Panc1 (cell line): ENCODE measurements at regions of chr3 and their contacts with region 1.

Region 1: GRCh38 chr3:63232739-63233365 is 45.3 kb upstream of the SYNPR start:
- DNase-seq: no peak
- ATAC-seq: no peak
- H3K4me3 ChIP-seq: no peak overlapping the region
- H3K27ac ChIP-seq: no peak overlapping the region
- H3K4me1 ChIP-seq: no peaks in the 10 kb centered on the region
- H3K27me3 ChIP-seq: no peaks in the 10 kb centered on the region
- CTCF ChIP-seq: peak; percentile 29; the same call in 1 of the 2 replicates

Region 2: DNA sequence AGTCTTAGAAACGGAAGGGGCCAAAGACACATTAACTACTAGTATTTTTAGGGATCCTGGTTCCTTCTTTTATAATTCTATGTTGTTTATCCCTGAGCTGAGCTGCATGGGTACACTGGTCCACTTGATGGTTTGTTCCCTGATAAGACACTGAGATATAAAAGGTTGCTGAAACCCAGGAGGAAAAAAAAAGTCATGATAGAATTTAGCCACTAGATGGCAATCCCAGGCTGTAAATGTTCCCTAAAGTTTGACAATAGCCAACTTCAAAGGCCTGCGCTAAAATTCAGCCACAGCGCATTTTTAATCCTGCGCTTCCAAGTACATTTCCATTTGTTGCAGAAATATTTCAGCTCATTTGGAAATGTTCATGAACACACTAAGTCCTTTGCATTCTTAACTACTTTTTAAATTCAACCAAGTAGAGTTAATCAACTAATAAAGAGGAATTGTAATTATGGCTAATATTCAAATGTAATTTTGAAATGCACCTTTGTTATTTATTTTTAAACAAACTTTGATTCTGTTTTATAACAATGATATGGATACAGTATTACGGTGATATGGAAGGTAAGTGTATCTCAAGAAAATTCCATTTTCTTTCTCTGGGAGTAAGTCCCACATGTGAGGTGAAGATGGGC is 610.2 kb before region 1 on chr3:
- CTCF ChIA-PET with region 1: no interaction called
- POLR2A ChIA-PET with region 1: no interaction called
- in situ Hi-C with region 1: no loop called
- intact Hi-C with region 1: loop called (anchors 5 kb)
- DNase-seq: peak; percentile 48
- ATAC-seq: no peak
- H3K4me3 ChIP-seq: no peak overlapping the region
- H3K27ac ChIP-seq: no peak overlapping the region
- H3K4me1 ChIP-seq: no peaks in the 10 kb centered on the region
- H3K27me3 ChIP-seq: no peaks in the 10 kb centered on the region
- CTCF ChIP-seq: peak; percentile 62

Region 3: DNA sequence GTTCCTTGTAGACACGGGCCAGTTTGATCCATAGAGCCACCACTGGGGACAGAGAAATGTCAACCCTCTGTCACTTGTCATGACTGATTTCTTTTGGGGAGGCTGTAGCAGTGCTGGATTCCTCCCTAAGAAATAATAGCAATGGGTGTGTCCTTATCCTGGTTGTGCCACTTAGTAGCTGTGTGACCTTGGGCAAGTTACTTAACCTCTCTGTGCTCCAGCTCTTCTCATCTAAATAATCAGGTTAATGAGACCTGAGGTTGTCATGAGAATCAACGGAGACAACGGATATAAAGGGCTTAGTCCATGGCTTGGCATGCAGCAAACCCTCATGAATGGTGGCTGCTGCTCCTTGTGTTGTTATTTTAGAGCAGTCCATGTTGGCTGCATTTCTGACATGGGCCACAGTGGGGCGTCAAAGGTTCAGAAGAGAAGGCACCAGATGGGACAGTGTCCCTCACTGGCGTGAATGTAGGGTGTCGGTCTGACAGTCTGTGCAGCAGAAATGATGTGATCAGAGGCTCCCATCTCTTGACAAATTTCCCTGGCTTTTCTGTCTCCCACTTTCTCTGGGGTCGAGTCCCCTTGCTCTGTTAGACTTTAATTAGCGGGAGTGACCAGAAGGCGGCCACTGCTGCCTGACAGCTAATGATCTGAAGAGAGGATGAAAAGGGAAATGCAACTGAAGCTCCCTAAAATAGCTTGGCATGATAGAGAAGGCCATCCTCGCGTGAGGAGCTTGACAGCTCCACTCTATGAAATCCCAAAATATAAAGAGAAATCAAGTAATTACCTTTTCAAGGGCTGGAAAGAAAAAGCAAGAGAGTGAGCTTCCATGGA is 567.0 kb before region 1 on chr3:
- CTCF ChIA-PET with region 1: no interaction called
- POLR2A ChIA-PET with region 1: no interaction called
- in situ Hi-C with region 1: no loop called
- intact Hi-C with region 1: loop called (anchors 10 kb)
- DNase-seq: peak; percentile 7
- ATAC-seq: peak; percentile 86
- H3K4me3 ChIP-seq: no peak overlapping the region
- H3K27ac ChIP-seq: no peak overlapping the region
- H3K4me1 ChIP-seq: no peaks in the 10 kb centered on the region
- H3K27me3 ChIP-seq: no peaks in the 10 kb centered on the region
- CTCF ChIP-seq: peak; percentile 74